Naive thymus-derived CD4-positive, alpha-beta T cell (primary cell): ENCODE measurements at regions of chr17 and their contacts with region 1.

Region 1: GRCh38 chr17:80866147-80866793 is 125.4 kb upstream of the CHMP6 start:
- DNase-seq: peak in 7 of 9 donors; percentile 28 to 68 (median 41)
- ATAC-seq: peak; percentile 78
- H3K4me3 ChIP-seq: no peak overlapping the region
- H3K4me3 Mint-ChIP-seq: peak overlapping the region in 2 of 10 donors; percentile 46 to 69
- H3K27ac ChIP-seq: no peak overlapping the region
- H3K27ac Mint-ChIP-seq: peak overlapping the region in 7 of 9 donors; percentile 9 to 88 (median 62)
- H3K4me1 ChIP-seq: peaks cover 0 to 26% of the 10 kb centered on the region in 2 donors
- H3K4me1 Mint-ChIP-seq: peaks cover 43 to 86% (median 71%) of the 10 kb centered on the region in 7 donors
- H3K27me3 ChIP-seq: no peaks in the 10 kb centered on the region
- H3K27me3 Mint-ChIP-seq: no peaks in the 10 kb centered on the region

Region 2: GRCh38 chr17:80743181-80743771 is 123.0 kb before region 1 on chr17:
- CTCF ChIA-PET with region 1: no interaction called
- POLR2A ChIA-PET with region 1: no interaction called
- intact Hi-C with region 1: loop called in 1 of 2 experiments (anchors 5 kb)
- DNase-seq: peak in 8 of 9 donors; percentile 40 to 82 (median 72)
- ATAC-seq: peak; percentile 75
- H3K4me3 ChIP-seq: peak overlapping the region; percentile 33
- H3K4me3 Mint-ChIP-seq: peak overlapping the region; percentile 80 to 93 (median 85)
- H3K27ac ChIP-seq: peak overlapping the region; percentile 74
- H3K27ac Mint-ChIP-seq: peak overlapping the region; percentile 83 to 95 (median 91)
- H3K4me1 ChIP-seq: peaks cover 0 to 61% of the 10 kb centered on the region in 2 donors
- H3K4me1 Mint-ChIP-seq: peaks cover 39 to 80% (median 69%) of the 10 kb centered on the region in 7 donors
- H3K27me3 ChIP-seq: no peaks in the 10 kb centered on the region
- H3K27me3 Mint-ChIP-seq: no peaks in the 10 kb centered on the region

Region 3: GRCh38 chr17:80780381-80781198 is 85.7 kb before region 1 on chr17:
- CTCF ChIA-PET with region 1: no interaction called
- POLR2A ChIA-PET with region 1: interaction called, 3 read pairs
- intact Hi-C with region 1: loop called (anchors 5 kb)
- DNase-seq: peak in 3 of 9 donors; percentile 29 to 57 (median 43)
- ATAC-seq: peak; percentile 40
- H3K4me3 ChIP-seq: peak overlapping the region; percentile 45
- H3K4me3 Mint-ChIP-seq: peak overlapping the region; percentile 62 to 96 (median 82)
- H3K27ac ChIP-seq: peak overlapping the region; percentile 70
- H3K27ac Mint-ChIP-seq: peak overlapping the region; percentile 87 to 99 (median 94)
- H3K4me1 ChIP-seq: peaks cover 38 to 57% of the 10 kb centered on the region in 2 donors
- H3K4me1 Mint-ChIP-seq: peaks cover 30 to 90% (median 77%) of the 10 kb centered on the region in 7 donors
- H3K27me3 ChIP-seq: no peaks in the 10 kb centered on the region
- H3K27me3 Mint-ChIP-seq: no peaks in the 10 kb centered on the region

Region 4: GRCh38 chr17:80847496-80848230 is 18.6 kb before region 1 on chr17:
- CTCF ChIA-PET with region 1: no interaction called
- POLR2A ChIA-PET with region 1: interaction called, 3 read pairs
- intact Hi-C with region 1: loop called in 1 of 2 experiments (anchors 2 kb)
- DNase-seq: peak in 8 of 9 donors; percentile 33 to 67 (median 58)
- ATAC-seq: peak; percentile 89
- H3K4me3 ChIP-seq: peak overlapping the region; percentile 9
- H3K4me3 Mint-ChIP-seq: peak overlapping the region; percentile 52 to 88 (median 80)
- H3K27ac ChIP-seq: peak overlapping the region; percentile 77
- H3K27ac Mint-ChIP-seq: peak overlapping the region; percentile 61 to 97 (median 94)
- H3K4me1 ChIP-seq: peaks cover 15 to 50% of the 10 kb centered on the region in 2 donors
- H3K4me1 Mint-ChIP-seq: peaks cover 35 to 69% (median 67%) of the 10 kb centered on the region in 7 donors
- H3K27me3 ChIP-seq: no peaks in the 10 kb centered on the region
- H3K27me3 Mint-ChIP-seq: no peaks in the 10 kb centered on the region

Region 5: GRCh38 chr17:80899402-80900268 is 33.4 kb after region 1 on chr17:
- CTCF ChIA-PET with region 1: interaction called, 6 read pairs
- POLR2A ChIA-PET with region 1: no interaction called
- intact Hi-C with region 1: loop called in 1 of 2 experiments (anchors 1 kb)
- DNase-seq: peak; percentile 54 to 81 (median 76)
- ATAC-seq: peak; percentile 91
- H3K4me3 ChIP-seq: no peak overlapping the region
- H3K4me3 Mint-ChIP-seq: peak overlapping the region in 1 of 10 donors; percentile 25
- H3K27ac ChIP-seq: no peak overlapping the region
- H3K27ac Mint-ChIP-seq: peak overlapping the region in 4 of 9 donors; percentile 7 to 38 (median 26)
- H3K4me1 ChIP-seq: peaks cover 4 to 6% of the 10 kb centered on the region in 2 donors
- H3K4me1 Mint-ChIP-seq: peaks cover 5 to 63% (median 10%) of the 10 kb centered on the region in 7 donors
- H3K27me3 ChIP-seq: no peaks in the 10 kb centered on the region
- H3K27me3 Mint-ChIP-seq: no peaks in the 10 kb centered on the region

Region 6: DNA sequence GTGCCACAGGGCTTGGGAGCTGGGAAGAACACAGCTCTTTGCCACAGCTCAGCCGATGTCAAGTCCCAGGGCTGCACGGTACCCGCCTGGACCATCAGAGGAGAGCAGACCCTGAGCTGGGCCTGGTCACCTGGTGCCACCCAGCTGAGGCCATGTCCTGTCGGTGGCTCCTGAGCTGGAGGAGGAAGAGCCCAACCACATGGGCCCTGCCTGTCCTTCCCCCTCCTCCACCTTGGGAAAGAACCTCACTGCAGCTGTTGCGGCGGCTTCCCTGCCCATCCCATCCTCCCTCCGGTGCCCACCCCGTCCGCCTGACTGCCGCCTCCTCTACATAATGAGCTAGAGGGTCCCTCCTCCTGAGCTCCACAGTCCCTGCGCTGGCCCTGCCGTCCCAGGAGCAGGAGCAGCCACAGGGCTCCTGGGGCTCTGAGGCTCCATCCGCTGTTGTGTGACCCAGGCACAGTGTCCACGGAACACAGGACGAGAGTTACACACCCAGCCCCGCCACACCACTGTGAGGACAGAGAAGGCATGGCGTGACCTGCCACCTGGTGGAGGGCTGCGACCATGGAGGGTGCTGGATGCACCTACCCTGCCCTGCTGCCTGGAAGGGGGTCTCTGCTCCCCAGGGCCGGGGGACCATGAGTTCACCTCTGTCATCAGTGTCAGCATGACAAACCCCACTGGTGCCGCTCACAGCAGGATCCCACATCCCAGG is 103.9 kb after region 1 on chr17:
- CTCF ChIA-PET with region 1: no interaction called
- POLR2A ChIA-PET with region 1: no interaction called
- intact Hi-C with region 1: loop called in 1 of 2 experiments (anchors 10 kb)
- DNase-seq: peak in 8 of 9 donors; percentile 23 to 49 (median 41)
- ATAC-seq: peak; percentile 80
- H3K4me3 ChIP-seq: no peak overlapping the region
- H3K4me3 Mint-ChIP-seq: peak overlapping the region in 5 of 10 donors; percentile 11 to 56 (median 24)
- H3K27ac ChIP-seq: no peak overlapping the region
- H3K27ac Mint-ChIP-seq: peak overlapping the region in 6 of 9 donors; percentile 37 to 86 (median 50)
- H3K4me1 ChIP-seq: peaks cover 0 to 20% of the 10 kb centered on the region in 2 donors
- H3K4me1 Mint-ChIP-seq: peaks cover 5 to 14% (median 6%) of the 10 kb centered on the region in 7 donors
- H3K27me3 ChIP-seq: no peaks in the 10 kb centered on the region
- H3K27me3 Mint-ChIP-seq: peaks cover 0 to 9% (median 0%) of the 10 kb centered on the region in 5 donors